IMR-90 (cell line): ENCODE measurements at regions of chr1 and their contacts with region 1.

Region 1: GRCh38 chr1:248873409-248873992 is 14.6 kb upstream of the ZNF692 start:
- DNase-seq: peak; percentile 94
- ATAC-seq: peak; percentile 86
- H3K4me3 ChIP-seq: peak overlapping the region; percentile 61
- H3K27ac ChIP-seq: peak overlapping the region; percentile 15
- H3K4me1 ChIP-seq: no peaks in the 10 kb centered on the region
- H3K27me3 ChIP-seq: no peaks in the 10 kb centered on the region
- CTCF ChIP-seq: 0 out of 2 replicates have a peak, but pooled peaks have one; percentile 15
- POLR2A ChIP-seq: 0 out of 2 replicates have a peak, but pooled peaks have one; percentile 50
- RAD21 ChIP-seq: 0 out of 2 replicates have a peak, but pooled peaks have one; percentile 7

Region 2: GRCh38 chr1:248779350-248779749 is 94.2 kb before region 1 on chr1:
- CTCF ChIA-PET with region 1: no interaction called
- POLR2A ChIA-PET with region 1: no interaction called
- dilution Hi-C with region 1: no loop called
- in situ Hi-C with region 1: no loop called
- intact Hi-C with region 1: no loop called
- DNase-seq: no peak
- ATAC-seq: no peak
- H3K4me3 ChIP-seq: no peak overlapping the region
- H3K27ac ChIP-seq: no peak overlapping the region
- H3K4me1 ChIP-seq: no peaks in the 10 kb centered on the region
- H3K27me3 ChIP-seq: no peaks in the 10 kb centered on the region
- CTCF ChIP-seq: no peak
- POLR2A ChIP-seq: no peak
- RAD21 ChIP-seq: no peak

Region 3: GRCh38 chr1:248793592-248793991 is 79.9 kb before region 1 on chr1:
- CTCF ChIA-PET with region 1: no interaction called
- POLR2A ChIA-PET with region 1: no interaction called
- dilution Hi-C with region 1: no loop called
- in situ Hi-C with region 1: no loop called
- intact Hi-C with region 1: no loop called
- DNase-seq: no peak
- ATAC-seq: no peak
- H3K4me3 ChIP-seq: no peak overlapping the region
- H3K27ac ChIP-seq: no peak overlapping the region
- H3K4me1 ChIP-seq: no peaks in the 10 kb centered on the region
- H3K27me3 ChIP-seq: no peaks in the 10 kb centered on the region
- CTCF ChIP-seq: no peak
- POLR2A ChIP-seq: no peak
- RAD21 ChIP-seq: no peak

Region 4: GRCh38 chr1:248825909-248826760 is 47.4 kb before region 1 on chr1 and contains the start of gene SH3BP5L:
- CTCF ChIA-PET with region 1: no interaction called
- POLR2A ChIA-PET with region 1: no interaction called
- dilution Hi-C with region 1: no loop called
- in situ Hi-C with region 1: no loop called
- intact Hi-C with region 1: loop called (anchors 1 kb)
- DNase-seq: peak; percentile 96
- ATAC-seq: peak; percentile 79
- H3K4me3 ChIP-seq: peak within 1 kb of the TSS; percentile 79
- H3K27ac ChIP-seq: peak within 1 kb of the TSS; percentile 96
- H3K4me1 ChIP-seq: peaks cover 18% of the 10 kb centered on the region
- H3K27me3 ChIP-seq: no peaks in the 10 kb centered on the region
- CTCF ChIP-seq: peak; percentile 57
- POLR2A ChIP-seq: peak; percentile 77
- RAD21 ChIP-seq: peak; percentile 32
- total RNA-seq, gene SH3BP5L: 23.3 and 25.0 TPM in 2 replicates

Region 5: GRCh38 chr1:248837794-248838356 is 35.6 kb before region 1 on chr1 and contains the start of gene ZNF672:
- CTCF ChIA-PET with region 1: no interaction called
- POLR2A ChIA-PET with region 1: no interaction called
- dilution Hi-C with region 1: no loop called
- in situ Hi-C with region 1: no loop called
- intact Hi-C with region 1: loop called (anchors 1 kb)
- DNase-seq: peak; percentile 97
- ATAC-seq: peak; percentile 90
- H3K4me3 ChIP-seq: peak within 1 kb of the TSS; percentile 89
- H3K27ac ChIP-seq: peak within 1 kb of the TSS; percentile 97
- H3K4me1 ChIP-seq: peaks cover 10% of the 10 kb centered on the region
- H3K27me3 ChIP-seq: no peaks in the 10 kb centered on the region
- CTCF ChIP-seq: no peak
- POLR2A ChIP-seq: no peak
- RAD21 ChIP-seq: no peak
- total RNA-seq, gene ZNF672: 6.6 and 6.9 TPM in 2 replicates

Region 6: DNA sequence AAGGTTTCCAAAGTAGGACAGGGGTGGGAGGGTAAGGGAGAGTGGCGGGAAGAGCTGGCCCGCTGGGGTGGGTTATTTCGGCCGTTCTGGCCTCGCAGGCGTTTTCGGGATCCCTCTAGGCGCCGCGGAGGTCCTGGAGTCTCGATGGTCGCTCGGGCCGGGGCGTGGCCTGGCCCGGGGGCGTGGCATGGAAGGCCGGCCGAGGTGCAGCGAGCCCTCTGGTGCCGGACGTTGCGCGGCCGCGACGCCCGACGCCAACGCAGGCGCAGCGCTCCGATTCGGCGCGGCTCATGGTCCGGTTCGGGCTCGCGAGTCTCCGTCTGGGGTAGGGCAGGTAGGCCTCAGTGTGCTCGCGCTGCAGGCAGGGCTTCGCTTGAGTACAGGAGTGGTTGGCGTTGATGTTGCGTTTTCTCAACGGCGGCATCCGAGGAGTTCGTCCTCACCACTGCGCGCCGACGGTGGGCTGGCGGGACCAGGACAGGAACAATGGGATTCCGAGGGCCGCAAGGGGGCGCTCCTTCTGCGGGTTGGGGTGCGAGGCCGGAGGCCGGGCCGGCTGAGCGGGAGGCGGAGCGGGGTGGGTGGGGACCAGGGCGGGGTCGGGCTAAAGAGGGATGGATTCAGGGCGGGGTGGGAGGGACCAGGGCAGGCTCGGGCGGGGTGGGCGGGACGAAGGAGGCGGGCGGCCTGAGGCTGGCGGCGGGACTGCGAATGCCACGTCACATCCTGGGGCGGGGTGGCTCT is 32.7 kb after region 1 on chr1 and contains the start of gene PGBD2:
- CTCF ChIA-PET with region 1: no interaction called
- POLR2A ChIA-PET with region 1: no interaction called
- dilution Hi-C with region 1: no loop called
- in situ Hi-C with region 1: no loop called
- intact Hi-C with region 1: loop called (anchors 1 kb)
- DNase-seq: peak; percentile 89
- ATAC-seq: peak; percentile 97
- H3K4me3 ChIP-seq: peak within 1 kb of the TSS; percentile 91
- H3K27ac ChIP-seq: peak within 1 kb of the TSS; percentile 97
- H3K4me1 ChIP-seq: no peaks in the 10 kb centered on the region
- H3K27me3 ChIP-seq: no peaks in the 10 kb centered on the region
- CTCF ChIP-seq: peak; percentile 68
- POLR2A ChIP-seq: peak; percentile 63
- RAD21 ChIP-seq: peak; percentile 49
- total RNA-seq, gene PGBD2: 6.7 and 6.8 TPM in 2 replicates